ENCODE measurements at regions of chr1 and their contacts with region 1.

Region 1: DNA sequence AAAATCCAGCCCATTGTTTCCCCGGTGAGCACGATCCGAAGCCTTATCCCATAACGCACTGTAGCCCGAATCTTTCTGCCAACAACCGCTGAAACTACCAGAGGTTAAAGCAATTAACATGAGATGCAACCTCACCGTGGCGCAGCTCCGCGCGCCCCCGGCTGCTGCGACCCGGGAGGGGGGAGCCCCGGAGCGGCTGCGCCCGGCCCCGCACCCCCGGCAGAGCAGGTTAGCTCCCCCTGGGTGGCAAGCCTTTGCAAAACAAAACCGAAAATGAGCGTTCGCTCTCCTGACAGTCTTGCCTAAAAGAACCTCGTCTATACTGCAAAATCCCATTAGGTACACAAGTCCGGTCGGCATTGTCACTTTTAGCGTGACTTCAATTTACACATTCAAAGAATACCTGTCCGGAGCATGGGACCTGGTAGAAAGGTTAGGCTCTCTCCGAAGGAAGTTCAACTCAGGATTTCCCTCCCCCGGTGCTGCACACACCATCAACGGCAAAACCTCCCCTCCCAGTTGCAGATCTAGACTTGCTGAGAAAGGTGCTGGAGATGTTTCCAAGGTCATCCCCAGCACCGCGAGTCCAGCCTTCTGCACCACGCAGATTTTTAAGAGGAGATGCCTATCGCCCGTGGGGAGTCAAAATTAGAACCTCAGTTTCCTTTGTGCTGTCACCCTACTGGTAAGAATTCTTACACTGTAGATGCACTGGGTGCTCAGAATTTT is 107.5 kb downstream of the ZNF281 start:
- DNase-seq: peak; percentile 59
- ATAC-seq: peak; percentile 67
- H3K4me3 Mint-ChIP-seq: peak overlapping the region; percentile 89
- H3K27ac Mint-ChIP-seq: peak overlapping the region; percentile 82
- H3K4me1 Mint-ChIP-seq: peaks cover 51% of the 10 kb centered on the region
- H3K27me3 Mint-ChIP-seq: peaks cover 1% of the 10 kb centered on the region
- CTCF ChIP-seq: no peak

Region 2: DNA sequence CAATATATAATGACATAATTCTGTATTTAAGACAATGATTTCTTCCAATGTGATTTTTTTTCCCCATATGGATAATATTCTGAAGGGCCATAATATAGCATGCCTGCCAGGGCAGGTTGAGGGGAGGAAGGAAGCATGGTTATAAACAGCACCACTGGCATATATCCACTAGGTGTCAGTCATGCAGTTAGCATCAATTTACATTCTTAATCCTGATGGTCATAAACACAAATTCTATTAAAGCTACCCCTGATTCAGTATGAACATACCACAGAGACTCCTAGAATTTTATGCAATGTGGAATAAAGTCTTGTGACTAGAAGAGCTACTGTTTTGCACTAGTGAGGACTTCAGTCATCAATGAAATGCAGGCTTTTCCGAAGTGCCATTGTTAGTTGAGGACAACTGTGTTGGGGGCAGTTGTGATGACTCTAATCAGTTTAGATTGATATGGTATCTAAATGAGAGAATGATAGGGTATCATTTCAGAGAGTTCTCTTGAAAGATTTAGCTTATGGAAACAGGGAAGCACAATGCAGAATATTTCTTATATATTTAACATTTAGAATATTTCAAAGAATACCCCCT is 617.6 kb before region 1 on chr1:
- CTCF ChIA-PET with region 1: interaction called, 5 read pairs
- POLR2A ChIA-PET with region 1: no interaction called
- intact Hi-C with region 1: loop called (anchors 1 kb)
- DNase-seq: no peak
- ATAC-seq: peak; percentile 71
- H3K4me3 Mint-ChIP-seq: no peak overlapping the region
- H3K27ac Mint-ChIP-seq: no peak overlapping the region
- H3K4me1 Mint-ChIP-seq: no peaks in the 10 kb centered on the region
- H3K27me3 Mint-ChIP-seq: peaks cover 6% of the 10 kb centered on the region
- CTCF ChIP-seq: peak; percentile 61

Region 3: DNA sequence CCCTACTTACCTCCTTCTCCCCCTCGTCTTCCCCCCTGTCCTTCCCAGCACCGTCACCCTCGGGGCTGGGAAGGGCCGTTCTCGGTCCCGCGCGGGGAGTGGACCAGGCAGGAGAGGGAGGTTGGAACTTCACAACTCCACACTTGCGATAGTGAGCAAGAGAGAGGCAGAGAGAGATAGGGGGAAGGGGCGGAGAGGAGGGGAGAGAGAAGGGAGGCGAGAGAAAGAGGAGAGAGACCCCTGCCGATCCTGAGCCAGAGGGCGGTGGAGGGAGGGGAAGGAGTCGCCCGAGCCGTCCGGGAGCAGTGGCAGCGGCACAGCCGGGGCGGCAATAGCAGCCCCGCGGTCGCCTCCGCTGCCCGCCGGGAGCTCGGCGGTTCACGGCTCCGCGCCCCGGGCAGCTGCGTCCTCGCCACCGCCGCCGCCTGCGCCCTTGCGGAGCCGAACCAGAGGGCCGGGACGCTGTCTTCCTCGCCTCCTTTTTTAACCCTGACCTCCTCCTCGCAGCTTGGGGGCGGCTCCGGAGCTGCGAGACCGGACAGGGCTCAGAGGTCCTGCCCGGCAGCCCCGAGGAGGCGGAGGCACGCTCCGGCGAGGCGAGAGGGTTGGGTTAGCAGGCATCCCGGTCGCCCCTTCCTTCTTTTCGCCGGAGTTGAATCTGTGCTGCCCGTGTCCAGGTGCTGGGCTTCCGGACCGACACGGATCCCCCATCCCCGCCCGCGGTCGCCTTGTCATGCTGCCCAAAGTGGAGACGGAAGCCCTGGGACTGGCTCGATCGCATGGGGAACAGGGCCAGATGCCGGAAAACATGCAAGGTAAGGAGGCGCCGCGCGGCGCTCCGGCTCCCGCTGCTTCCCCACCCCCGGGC is 263.1 kb before region 1 on chr1:
- CTCF ChIA-PET with region 1: no interaction called
- POLR2A ChIA-PET with region 1: no interaction called
- intact Hi-C with region 1: loop called (anchors 2 kb)
- DNase-seq: peak; percentile 48
- ATAC-seq: peak; percentile 40
- H3K4me3 Mint-ChIP-seq: peak overlapping the region; percentile 85
- H3K27ac Mint-ChIP-seq: no peak overlapping the region
- H3K4me1 Mint-ChIP-seq: peaks cover 40% of the 10 kb centered on the region
- H3K27me3 Mint-ChIP-seq: peaks cover 59% of the 10 kb centered on the region
- CTCF ChIP-seq: no peak

Region 4: GRCh38 chr1:200172756-200173618 is 129.4 kb before region 1 on chr1:
- CTCF ChIA-PET with region 1: no interaction called
- POLR2A ChIA-PET with region 1: interaction called, 11 read pairs
- intact Hi-C with region 1: no loop called
- DNase-seq: no peak
- ATAC-seq: no peak
- H3K4me3 Mint-ChIP-seq: no peak overlapping the region
- H3K27ac Mint-ChIP-seq: no peak overlapping the region
- H3K4me1 Mint-ChIP-seq: peaks cover 14% of the 10 kb centered on the region
- H3K27me3 Mint-ChIP-seq: no peaks in the 10 kb centered on the region
- CTCF ChIP-seq: no peak

Region 5: GRCh38 chr1:200290010-200290685 is 12.2 kb before region 1 on chr1:
- CTCF ChIA-PET with region 1: interaction called, 4 read pairs
- POLR2A ChIA-PET with region 1: interaction called, 23 read pairs
- intact Hi-C with region 1: loop called (anchors 1 kb)
- DNase-seq: no peak
- ATAC-seq: no peak
- H3K4me3 Mint-ChIP-seq: no peak overlapping the region
- H3K27ac Mint-ChIP-seq: no peak overlapping the region
- H3K4me1 Mint-ChIP-seq: peaks cover 36% of the 10 kb centered on the region
- H3K27me3 Mint-ChIP-seq: no peaks in the 10 kb centered on the region
- CTCF ChIP-seq: no peak

Region 6: DNA sequence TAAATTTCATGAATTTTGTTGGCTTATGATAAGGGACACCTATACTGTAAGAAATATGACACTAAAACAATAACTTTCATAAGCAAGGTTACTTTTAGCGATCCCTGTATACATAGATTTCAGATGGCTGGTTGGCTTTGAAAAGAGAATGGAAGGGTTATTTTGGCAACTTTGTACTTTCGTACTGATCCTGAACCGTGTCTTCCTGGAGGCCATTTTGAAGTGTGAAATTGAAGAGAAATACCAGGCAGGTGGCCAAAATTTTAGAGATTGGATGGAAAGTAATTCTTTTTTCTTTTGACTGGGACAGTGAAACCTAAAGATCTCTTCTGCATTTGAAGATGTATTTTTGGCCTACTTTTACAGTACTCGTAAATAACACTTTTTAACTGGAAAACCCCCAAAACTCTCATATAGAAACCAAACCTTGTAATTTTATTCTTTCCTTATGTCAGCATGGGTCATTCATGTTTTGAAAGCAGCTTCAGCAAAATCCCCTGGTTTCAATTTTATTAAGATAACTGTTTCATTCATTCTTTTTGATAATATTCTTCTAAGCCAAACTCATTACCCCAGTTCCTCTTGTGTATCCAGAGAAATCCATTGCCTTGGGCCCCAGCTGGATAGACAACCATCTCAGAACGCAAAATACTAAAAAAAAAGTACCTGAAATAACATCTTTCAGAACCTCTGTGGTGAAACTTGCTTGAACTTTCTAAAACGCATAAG is 145.8 kb after region 1 on chr1:
- CTCF ChIA-PET with region 1: no interaction called
- POLR2A ChIA-PET with region 1: interaction called, 9 read pairs
- intact Hi-C with region 1: loop called (anchors 1 kb)
- DNase-seq: no peak
- ATAC-seq: peak; percentile 77
- H3K4me3 Mint-ChIP-seq: peak overlapping the region; percentile 49
- H3K27ac Mint-ChIP-seq: peak overlapping the region; percentile 87
- H3K4me1 Mint-ChIP-seq: peaks cover 24% of the 10 kb centered on the region
- H3K27me3 Mint-ChIP-seq: no peaks in the 10 kb centered on the region
- CTCF ChIP-seq: no peak

Region 7: GRCh38 chr1:200877839-200878551 is 575.6 kb after region 1 on chr1:
- CTCF ChIA-PET with region 1: no interaction called
- POLR2A ChIA-PET with region 1: no interaction called
- intact Hi-C with region 1: loop called (anchors 10 kb)
- DNase-seq: no peak
- ATAC-seq: peak; percentile 58
- H3K4me3 Mint-ChIP-seq: no peak overlapping the region
- H3K27ac Mint-ChIP-seq: no peak overlapping the region
- H3K4me1 Mint-ChIP-seq: peaks cover 30% of the 10 kb centered on the region
- H3K27me3 Mint-ChIP-seq: peaks cover 12% of the 10 kb centered on the region
- CTCF ChIP-seq: no peak